ENCODE measurements at regions of chr10 and their contacts with region 1.

Region 1: GRCh38 chr10:60444494-60445064 is 54.9 kb upstream of the ANK3 start:
- DNase-seq: peak; percentile 40
- H3K4me3 Mint-ChIP-seq: no peak overlapping the region
- H3K27ac Mint-ChIP-seq: no peak overlapping the region
- H3K4me1 Mint-ChIP-seq: peaks cover 22% of the 10 kb centered on the region
- H3K27me3 Mint-ChIP-seq: no peaks in the 10 kb centered on the region
- CTCF ChIP-seq: peak; percentile 63

Region 2: GRCh38 chr10:60237977-60238758 is 206.4 kb before region 1 on chr10:
- CTCF ChIA-PET with region 1: interaction called, 43 read pairs
- POLR2A ChIA-PET with region 1: no interaction called
- intact Hi-C with region 1: no loop called
- DNase-seq: peak; percentile 52
- H3K4me3 Mint-ChIP-seq: no peak overlapping the region
- H3K27ac Mint-ChIP-seq: no peak overlapping the region
- H3K4me1 Mint-ChIP-seq: no peaks in the 10 kb centered on the region
- H3K27me3 Mint-ChIP-seq: no peaks in the 10 kb centered on the region
- CTCF ChIP-seq: no peak

Region 3: GRCh38 chr10:60549686-60550085 is 105.1 kb after region 1 on chr10:
- CTCF ChIA-PET with region 1: interaction called, 3 read pairs
- POLR2A ChIA-PET with region 1: no interaction called
- intact Hi-C with region 1: loop called (anchors 5 kb)
- DNase-seq: peak; percentile 63
- H3K4me3 Mint-ChIP-seq: no peak overlapping the region
- H3K27ac Mint-ChIP-seq: no peak overlapping the region
- H3K4me1 Mint-ChIP-seq: no peaks in the 10 kb centered on the region
- H3K27me3 Mint-ChIP-seq: no peaks in the 10 kb centered on the region
- CTCF ChIP-seq: peak; percentile 34

Region 4: GRCh38 chr10:60646966-60647796 is 202.6 kb after region 1 on chr10:
- CTCF ChIA-PET with region 1: interaction called, 117 read pairs
- POLR2A ChIA-PET with region 1: interaction called, 8 read pairs
- intact Hi-C with region 1: loop called (anchors 1 kb)
- DNase-seq: peak; percentile 76
- H3K4me3 Mint-ChIP-seq: no peak overlapping the region
- H3K27ac Mint-ChIP-seq: no peak overlapping the region
- H3K4me1 Mint-ChIP-seq: no peaks in the 10 kb centered on the region
- H3K27me3 Mint-ChIP-seq: no peaks in the 10 kb centered on the region
- CTCF ChIP-seq: peak; percentile 70

Region 5: DNA sequence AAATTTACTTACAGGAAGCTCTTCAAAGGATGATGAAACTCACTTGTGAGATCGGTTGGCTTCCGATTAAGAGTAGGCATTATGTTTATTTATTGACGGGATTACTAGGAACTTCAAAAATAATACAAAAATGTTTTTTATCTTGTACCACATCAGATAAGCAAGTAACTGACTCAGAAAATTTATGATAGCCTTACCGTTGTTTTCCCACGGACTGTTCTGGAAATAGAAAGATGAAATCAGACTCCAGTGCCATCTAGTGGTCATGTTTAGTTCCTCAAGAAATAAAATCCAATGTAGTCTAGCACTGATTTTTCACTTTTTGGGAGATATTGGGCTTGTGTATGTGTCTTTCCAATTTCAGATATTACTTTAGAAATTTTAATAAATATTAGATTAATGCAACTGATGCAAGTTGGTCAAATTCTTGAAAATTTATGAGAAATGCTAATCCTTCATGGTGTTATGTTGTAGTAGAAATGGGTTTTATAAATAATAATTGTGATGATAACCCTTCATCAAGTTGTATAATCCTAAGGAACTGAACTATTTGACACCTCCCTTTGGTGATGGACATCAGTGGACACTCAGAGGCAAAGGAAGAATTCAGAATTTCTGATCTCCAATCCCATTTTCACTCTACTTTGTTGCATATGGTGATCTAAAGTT is 839.8 kb after region 1 on chr10:
- CTCF ChIA-PET with region 1: no interaction called
- POLR2A ChIA-PET with region 1: no interaction called
- intact Hi-C with region 1: loop called (anchors 10 kb)
- DNase-seq: peak; percentile 63
- H3K4me3 Mint-ChIP-seq: no peak overlapping the region
- H3K27ac Mint-ChIP-seq: no peak overlapping the region
- H3K4me1 Mint-ChIP-seq: peaks cover 7% of the 10 kb centered on the region
- H3K27me3 Mint-ChIP-seq: no peaks in the 10 kb centered on the region
- CTCF ChIP-seq: peak; percentile 53

Measured in MCF 10A (cell line).